ENCODE measurements at regions of chr5 and their contacts with region 1.

Region 1: GRCh38 chr5:148887123-148887881 is 60.9 kb downstream of the ADRB2 start:
- DNase-seq: no peak
- H3K4me3 ChIP-seq: no peak overlapping the region
- H3K27ac ChIP-seq: no peak overlapping the region
- H3K4me1 ChIP-seq: no peaks in the 10 kb centered on the region
- H3K27me3 ChIP-seq: no peaks in the 10 kb centered on the region
- CTCF ChIP-seq: no peak

Region 2: GRCh38 chr5:148799737-148800527 is 87.4 kb before region 1 on chr5:
- CTCF ChIA-PET with region 1: no interaction called
- POLR2A ChIA-PET with region 1: interaction called, 13 read pairs
- intact Hi-C with region 1: no loop called
- DNase-seq: no peak
- H3K4me3 ChIP-seq: no peak overlapping the region
- H3K27ac ChIP-seq: no peak overlapping the region
- H3K4me1 ChIP-seq: no peaks in the 10 kb centered on the region
- H3K27me3 ChIP-seq: no peaks in the 10 kb centered on the region
- CTCF ChIP-seq: no peak

Measured in PC-9 (cell line).